ENCODE measurements at regions of chr17 and their contacts with region 1.

Region 1: DNA sequence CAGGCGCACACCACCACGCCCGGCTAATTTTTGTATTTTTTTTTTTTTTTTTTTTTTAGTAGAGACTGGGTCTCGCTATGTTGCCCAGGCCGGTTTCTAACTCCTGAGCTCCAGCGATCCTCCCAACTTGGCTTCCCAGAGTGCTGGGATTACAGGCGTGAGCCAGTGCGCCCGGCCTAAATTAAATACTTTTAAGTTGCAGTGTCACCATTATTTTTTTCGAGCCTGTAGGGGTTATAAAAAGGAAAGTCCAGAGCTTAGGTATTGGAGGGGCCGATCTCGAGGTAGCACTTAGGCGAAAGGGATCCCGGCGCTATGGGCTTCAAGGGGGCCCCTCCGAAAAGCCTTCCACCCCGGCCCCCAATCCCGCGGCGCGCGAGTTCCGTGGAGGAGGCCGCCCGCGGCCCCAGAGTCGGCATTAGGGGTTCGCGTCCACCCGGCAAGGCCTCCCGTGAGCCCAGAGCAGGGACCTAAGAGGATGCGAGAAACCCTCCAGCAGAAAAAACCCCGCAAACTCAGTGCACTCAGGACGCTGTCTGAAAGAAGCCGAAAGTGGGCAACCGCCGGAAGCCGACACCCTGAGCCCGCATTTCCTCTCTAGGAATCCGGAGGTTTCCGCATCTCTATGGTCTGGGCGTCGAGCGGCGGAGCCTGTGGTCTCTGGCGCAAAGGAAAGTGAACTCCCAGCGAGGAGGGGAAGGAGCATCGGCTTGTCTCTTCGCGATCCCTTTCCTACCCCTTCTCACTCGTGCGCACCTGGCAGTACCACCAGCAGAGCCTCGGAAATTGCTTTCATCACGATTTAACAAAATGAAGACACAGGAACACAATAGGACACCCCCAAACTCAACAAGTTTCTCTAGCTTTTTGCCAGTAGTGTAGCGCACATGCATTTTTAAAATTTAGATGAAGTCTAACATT is 14.1 kb upstream of the RGS9 start:
- DNase-seq: peak; percentile 82
- H3K4me3 Mint-ChIP-seq: peak overlapping the region; percentile 82
- H3K27ac Mint-ChIP-seq: peak overlapping the region; percentile 89
- H3K4me1 Mint-ChIP-seq: peaks cover 32% of the 10 kb centered on the region
- H3K27me3 Mint-ChIP-seq: peaks cover 4% of the 10 kb centered on the region

Region 2: DNA sequence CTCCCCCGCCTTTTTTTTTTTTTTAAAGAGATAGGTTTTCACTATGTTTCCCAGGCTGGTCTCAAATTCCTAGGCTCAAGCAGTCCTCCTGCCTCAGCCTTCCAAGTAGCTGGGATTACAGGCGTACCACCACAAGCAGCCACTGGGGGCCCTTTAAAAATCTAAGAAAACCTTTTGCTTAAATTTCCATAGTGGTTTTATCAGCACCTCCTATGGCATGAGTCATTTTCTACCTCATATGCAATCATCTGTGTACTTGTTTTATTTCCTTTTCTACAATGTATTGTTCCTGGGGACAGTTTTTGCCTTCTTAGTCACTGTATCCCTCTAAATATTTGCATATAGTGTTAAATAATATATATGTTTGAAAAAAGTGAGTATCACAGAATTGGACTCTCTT is 95.8 kb before region 1 on chr17:
- intact Hi-C with region 1: loop called (anchors 1 kb)
- DNase-seq: peak; percentile 31
- H3K4me3 Mint-ChIP-seq: peak overlapping the region; percentile 60
- H3K27ac Mint-ChIP-seq: peak overlapping the region; percentile 91
- H3K4me1 Mint-ChIP-seq: peaks cover 77% of the 10 kb centered on the region
- H3K27me3 Mint-ChIP-seq: no peaks in the 10 kb centered on the region

Region 3: DNA sequence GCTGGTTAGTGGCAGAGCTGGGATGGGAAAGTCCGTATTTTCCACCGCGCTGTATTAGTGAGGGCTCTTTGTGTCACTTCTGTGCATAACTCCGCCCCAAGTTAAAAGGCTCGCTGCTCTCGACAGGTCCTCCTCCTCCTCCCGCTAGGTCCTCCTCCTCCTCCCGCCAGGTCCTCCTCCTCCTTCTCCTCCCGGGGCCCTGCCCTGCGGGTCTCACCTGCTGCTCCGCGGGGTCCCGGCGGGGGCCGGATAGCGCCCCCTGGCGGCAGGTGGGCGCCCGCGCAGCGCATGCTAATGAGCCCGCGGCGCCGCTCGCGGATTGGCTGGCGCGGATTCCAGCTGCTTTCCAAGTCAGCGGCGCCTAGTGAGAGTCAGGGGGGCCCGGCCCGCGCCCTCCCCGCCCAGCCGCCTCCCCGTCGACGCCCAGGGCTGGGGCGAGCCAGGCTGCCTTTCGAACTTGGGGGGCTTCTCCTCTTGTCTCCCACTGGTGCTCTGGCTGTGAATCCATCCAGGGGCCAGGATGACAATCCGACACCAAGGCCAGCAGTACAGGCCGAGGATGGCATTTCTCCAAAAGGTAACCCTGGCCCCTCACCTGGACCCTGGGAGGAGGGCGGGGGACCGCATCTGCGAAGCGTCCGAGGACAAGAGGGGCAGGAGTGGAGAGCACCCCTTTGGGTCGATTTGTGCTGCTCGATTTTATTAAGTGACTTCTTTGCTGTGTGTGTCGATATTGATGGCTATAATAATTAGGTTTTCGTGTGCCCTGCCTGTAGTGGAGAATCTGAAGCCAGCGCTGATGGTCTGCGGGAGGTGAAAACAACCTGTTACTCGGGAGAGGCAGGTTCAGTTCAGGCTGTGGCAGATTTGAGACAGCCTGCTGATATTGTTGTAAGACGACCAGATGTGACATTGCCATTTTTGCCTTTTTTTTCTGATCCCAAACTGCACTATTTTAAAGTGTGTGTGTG is 14.2 kb after region 1 on chr17 and contains the start of gene RGS9:
- intact Hi-C with region 1: loop called (anchors 1 kb)
- DNase-seq: peak; percentile 85
- H3K4me3 Mint-ChIP-seq: peak within 1 kb of the TSS; percentile 86
- H3K27ac Mint-ChIP-seq: peak within 1 kb of the TSS; percentile 49
- H3K4me1 Mint-ChIP-seq: peaks cover 33% of the 10 kb centered on the region
- H3K27me3 Mint-ChIP-seq: peaks cover 24% of the 10 kb centered on the region
- total RNA-seq, gene RGS9: 1.1 and 1.8 TPM in 2 replicates

Region 4: GRCh38 chr17:65198653-65199382 is 75.7 kb after region 1 on chr17:
- intact Hi-C with region 1: loop called (anchors 1 kb)
- DNase-seq: no peak
- H3K4me3 Mint-ChIP-seq: no peak overlapping the region
- H3K27ac Mint-ChIP-seq: peak overlapping the region; percentile 9
- H3K4me1 Mint-ChIP-seq: peaks cover 14% of the 10 kb centered on the region
- H3K27me3 Mint-ChIP-seq: peaks cover 6% of the 10 kb centered on the region

Measured in activated T-helper 1 cell treated with anti-CD3 and anti-CD28 coated beads, Interleukin-12 subunit alpha, Interleukin-12 subunit beta, Interleukin-2, Interleukin-4 antibody, amounts not matched to agents 30 ng/mL and 10 ng/mL and 1 ng/mL, durations not matched to agents 14 hours and 24 hours and 36 hours (primary cell).